Activated CD8-positive, alpha-beta T cell treated with anti-CD3 and anti-CD28 coated beads for 36 hours (primary cell): ENCODE measurements at regions of chr1 and their contacts with region 1.

Region 1: GRCh38 chr1:109643385-109644230 is 12.3 kb upstream of the GSTM4 start:
- DNase-seq: peak; percentile 94
- ATAC-seq: peak; percentile 95
- H3K4me3 Mint-ChIP-seq: no peak overlapping the region
- H3K27ac Mint-ChIP-seq: no peak overlapping the region
- H3K4me1 Mint-ChIP-seq: peaks cover 7% of the 10 kb centered on the region
- H3K27me3 Mint-ChIP-seq: peaks cover 1% of the 10 kb centered on the region
- CTCF ChIP-seq: peak; percentile 88

Region 2: GRCh38 chr1:109532365-109533136 is 111.1 kb before region 1 on chr1:
- CTCF ChIA-PET with region 1: interaction called, 294 read pairs
- POLR2A ChIA-PET with region 1: no interaction called
- intact Hi-C with region 1: no loop called
- DNase-seq: peak; percentile 93
- ATAC-seq: peak; percentile 93
- H3K4me3 Mint-ChIP-seq: peak overlapping the region; percentile 57
- H3K27ac Mint-ChIP-seq: peak overlapping the region; percentile 90
- H3K4me1 Mint-ChIP-seq: peaks cover 23% of the 10 kb centered on the region
- H3K27me3 Mint-ChIP-seq: no peaks in the 10 kb centered on the region
- CTCF ChIP-seq: peak; percentile 79

Region 3: DNA sequence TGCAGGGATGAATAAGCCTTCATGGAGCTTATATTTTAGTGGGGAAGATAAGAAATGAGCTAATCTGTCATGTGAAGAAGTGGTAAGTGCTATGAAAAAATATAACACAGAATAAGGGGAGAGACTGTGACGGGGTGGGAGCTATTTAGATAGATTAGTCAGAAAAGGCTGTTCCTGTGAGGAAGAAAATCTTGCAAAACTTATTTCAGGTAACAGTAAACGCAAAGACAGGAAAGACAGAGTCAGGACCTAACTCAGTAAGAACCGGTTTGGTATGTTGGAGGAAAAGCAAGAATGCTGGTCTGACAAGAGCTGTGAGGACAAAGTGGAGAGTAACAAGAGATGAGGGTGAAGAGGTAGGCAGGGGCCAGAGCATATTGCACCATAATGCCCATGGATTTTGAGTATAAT is 73.2 kb before region 1 on chr1:
- CTCF ChIA-PET with region 1: interaction called, 21 read pairs
- POLR2A ChIA-PET with region 1: no interaction called
- intact Hi-C with region 1: no loop called
- DNase-seq: no peak
- ATAC-seq: no peak
- H3K4me3 Mint-ChIP-seq: no peak overlapping the region
- H3K27ac Mint-ChIP-seq: no peak overlapping the region
- H3K4me1 Mint-ChIP-seq: peaks cover 31% of the 10 kb centered on the region
- H3K27me3 Mint-ChIP-seq: no peaks in the 10 kb centered on the region
- CTCF ChIP-seq: no peak

Region 4: DNA sequence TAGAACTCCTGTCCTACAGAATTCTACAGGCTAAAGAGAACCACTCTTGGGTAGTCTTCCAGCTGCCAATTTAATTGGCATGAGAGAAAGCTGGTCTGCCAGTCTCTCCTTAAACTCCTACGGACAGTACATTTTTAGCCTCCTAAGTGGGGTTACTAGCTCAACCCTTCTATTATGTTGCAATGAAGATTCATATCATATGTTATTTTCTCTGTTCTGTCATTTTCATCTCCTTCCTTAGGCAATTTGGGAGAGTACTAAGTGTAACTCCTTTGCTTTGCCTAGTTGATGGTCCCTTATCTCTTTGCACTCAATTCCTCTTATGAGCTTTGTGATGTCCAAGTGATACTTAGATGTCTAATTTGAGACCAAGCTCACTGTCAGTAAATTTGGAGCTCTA is 38.2 kb before region 1 on chr1:
- CTCF ChIA-PET with region 1: interaction called, 19 read pairs
- POLR2A ChIA-PET with region 1: no interaction called
- intact Hi-C with region 1: no loop called
- DNase-seq: no peak
- ATAC-seq: no peak
- H3K4me3 Mint-ChIP-seq: no peak overlapping the region
- H3K27ac Mint-ChIP-seq: no peak overlapping the region
- H3K4me1 Mint-ChIP-seq: peaks cover 15% of the 10 kb centered on the region
- H3K27me3 Mint-ChIP-seq: no peaks in the 10 kb centered on the region
- CTCF ChIP-seq: no peak

Region 5: GRCh38 chr1:109655601-109656519 is 12.3 kb after region 1 on chr1 and contains the start of gene GSTM4:
- CTCF ChIA-PET with region 1: interaction called, 155 read pairs
- POLR2A ChIA-PET with region 1: interaction called, 4 read pairs
- intact Hi-C with region 1: no loop called
- DNase-seq: peak; percentile 81
- ATAC-seq: peak; percentile 94
- H3K4me3 Mint-ChIP-seq: peak within 1 kb of the TSS; percentile 78
- H3K27ac Mint-ChIP-seq: peak within 1 kb of the TSS; percentile 83
- H3K4me1 Mint-ChIP-seq: peaks cover 6% of the 10 kb centered on the region
- H3K27me3 Mint-ChIP-seq: peaks cover 2% of the 10 kb centered on the region
- CTCF ChIP-seq: no peak
- total RNA-seq, gene GSTM4: 8.3 to 10.5 TPM

Region 6: DNA sequence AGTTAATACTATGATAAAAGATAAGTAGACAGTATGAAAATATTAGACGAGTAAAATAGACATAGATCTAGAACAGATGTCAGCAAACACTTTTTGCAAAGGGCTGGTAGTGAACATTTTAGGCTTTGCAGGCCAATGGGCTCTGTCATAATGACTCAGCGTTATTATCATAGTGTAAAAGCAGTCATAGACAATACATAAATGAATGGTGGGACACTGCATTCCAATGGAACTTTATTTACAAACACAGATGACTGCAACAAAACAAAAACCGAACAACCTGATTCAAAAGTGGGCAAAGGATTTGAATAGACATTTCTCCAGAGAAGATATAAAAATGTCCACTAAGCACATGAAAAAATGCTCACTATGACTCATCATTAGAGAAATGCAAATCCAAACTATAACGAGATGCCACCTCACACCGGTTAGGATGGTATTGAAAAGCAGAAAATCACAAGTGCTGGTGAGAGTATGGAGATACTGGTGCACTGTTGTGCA is 75.8 kb after region 1 on chr1:
- CTCF ChIA-PET with region 1: interaction called, 10 read pairs
- POLR2A ChIA-PET with region 1: no interaction called
- intact Hi-C with region 1: no loop called
- DNase-seq: no peak
- ATAC-seq: peak; percentile 17
- H3K4me3 Mint-ChIP-seq: no peak overlapping the region
- H3K27ac Mint-ChIP-seq: no peak overlapping the region
- H3K4me1 Mint-ChIP-seq: peaks cover 4% of the 10 kb centered on the region
- H3K27me3 Mint-ChIP-seq: no peaks in the 10 kb centered on the region
- CTCF ChIP-seq: no peak

Region 7: DNA sequence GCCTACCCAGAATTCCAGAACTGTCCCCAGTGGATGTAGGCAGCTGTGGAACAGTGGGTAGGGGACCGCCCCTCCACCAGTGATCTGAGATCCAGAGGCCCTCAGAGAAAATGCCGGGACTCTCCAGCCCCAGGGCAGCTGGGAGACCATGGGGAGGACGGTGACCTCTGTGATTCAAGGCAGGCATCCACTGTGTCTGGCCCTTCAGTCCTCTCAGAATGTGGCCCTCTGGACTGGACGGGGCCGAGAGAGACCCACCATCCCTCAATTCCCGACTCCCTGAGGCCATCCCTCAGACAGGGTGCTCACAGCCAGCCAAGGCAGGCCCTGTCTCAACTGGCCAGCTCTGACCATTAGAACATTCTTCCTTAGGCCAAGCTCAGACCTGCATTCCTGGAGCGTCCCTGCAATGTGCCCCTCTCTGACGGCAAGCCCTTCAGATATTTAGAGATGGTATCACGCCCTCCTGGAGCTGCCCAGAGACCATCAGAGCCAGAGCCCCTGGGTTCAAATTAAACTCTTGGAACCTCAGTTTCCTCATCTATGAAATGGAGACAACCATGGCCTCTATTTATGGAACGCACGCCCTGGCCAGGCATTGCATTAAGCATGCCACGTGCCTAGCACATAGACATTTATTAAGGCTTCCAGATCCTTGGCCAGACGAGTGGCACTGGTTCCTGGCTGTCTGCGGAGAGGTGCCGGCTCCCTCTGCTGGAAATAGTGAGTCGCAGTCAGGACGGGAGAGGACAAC is 129.7 kb after region 1 on chr1:
- CTCF ChIA-PET with region 1: interaction called, 211 read pairs
- POLR2A ChIA-PET with region 1: interaction called, 3 read pairs
- intact Hi-C with region 1: loop called (anchors 1 kb)
- DNase-seq: peak; percentile 84
- ATAC-seq: peak; percentile 86
- H3K4me3 Mint-ChIP-seq: no peak overlapping the region
- H3K27ac Mint-ChIP-seq: no peak overlapping the region
- H3K4me1 Mint-ChIP-seq: no peaks in the 10 kb centered on the region
- H3K27me3 Mint-ChIP-seq: no peaks in the 10 kb centered on the region
- CTCF ChIP-seq: peak; percentile 80